Sigmoid colon (tissue), 7 donors: ENCODE measurements at regions of chr2 and their contacts with region 1.

Region 1: GRCh38 chr2:172102391-172103278 is at the start of gene DLX2:
- DNase-seq: peak; percentile 82
- H3K4me3 ChIP-seq: peak within 1 kb of the TSS; percentile 9 to 51 (median 41)
- H3K27ac ChIP-seq: no peak within 1 kb of the TSS
- H3K4me1 ChIP-seq: peaks cover 0 to 72% (median 65%) of the 10 kb centered on the region in 4 donors
- H3K27me3 ChIP-seq: peaks cover 83 to 100% (median 99%) of the 10 kb centered on the region in 3 donors
- CTCF ChIP-seq: no peak
- EP300 ChIP-seq: no peak
- POLR2A ChIP-seq: no peak
- total RNA-seq, gene DLX2: under 0.01 to 0.14 TPM in 2 of 4 donors, not detected in the others

Region 2: DNA sequence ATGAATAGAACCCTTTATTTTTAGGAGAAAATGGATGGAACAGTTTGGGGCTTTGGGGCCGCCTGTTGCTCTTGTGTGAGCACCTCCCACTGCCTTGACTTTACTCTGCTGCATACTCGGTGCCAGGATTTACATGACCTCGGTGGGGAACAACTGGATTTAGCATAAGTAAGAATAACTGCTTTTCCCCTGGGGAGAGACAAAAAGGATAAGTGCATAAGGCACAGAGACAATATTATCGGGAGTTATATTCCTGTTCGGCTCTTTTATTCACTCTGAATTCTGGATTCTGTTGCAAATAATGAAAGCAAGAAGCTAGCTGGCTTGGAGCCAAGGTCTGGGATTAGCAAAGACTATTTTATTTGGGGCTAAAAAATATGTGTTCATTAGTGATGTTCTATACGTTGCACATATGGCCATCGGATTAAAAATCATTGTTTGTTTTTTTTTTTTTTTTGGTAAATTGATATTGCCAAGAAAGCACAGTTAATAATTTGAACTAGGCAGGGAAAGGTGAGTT is 510.5 kb before region 1 on chr2:
- intact Hi-C with region 1: loop called (anchors 5 kb)
- DNase-seq: no peak
- H3K4me3 ChIP-seq: no peak overlapping the region
- H3K27ac ChIP-seq: no peak overlapping the region
- H3K4me1 ChIP-seq: no peaks in the 10 kb centered on the region
- H3K27me3 ChIP-seq: no peaks in the 10 kb centered on the region
- CTCF ChIP-seq: no peak
- EP300 ChIP-seq: no peak
- POLR2A ChIP-seq: no peak

Region 3: DNA sequence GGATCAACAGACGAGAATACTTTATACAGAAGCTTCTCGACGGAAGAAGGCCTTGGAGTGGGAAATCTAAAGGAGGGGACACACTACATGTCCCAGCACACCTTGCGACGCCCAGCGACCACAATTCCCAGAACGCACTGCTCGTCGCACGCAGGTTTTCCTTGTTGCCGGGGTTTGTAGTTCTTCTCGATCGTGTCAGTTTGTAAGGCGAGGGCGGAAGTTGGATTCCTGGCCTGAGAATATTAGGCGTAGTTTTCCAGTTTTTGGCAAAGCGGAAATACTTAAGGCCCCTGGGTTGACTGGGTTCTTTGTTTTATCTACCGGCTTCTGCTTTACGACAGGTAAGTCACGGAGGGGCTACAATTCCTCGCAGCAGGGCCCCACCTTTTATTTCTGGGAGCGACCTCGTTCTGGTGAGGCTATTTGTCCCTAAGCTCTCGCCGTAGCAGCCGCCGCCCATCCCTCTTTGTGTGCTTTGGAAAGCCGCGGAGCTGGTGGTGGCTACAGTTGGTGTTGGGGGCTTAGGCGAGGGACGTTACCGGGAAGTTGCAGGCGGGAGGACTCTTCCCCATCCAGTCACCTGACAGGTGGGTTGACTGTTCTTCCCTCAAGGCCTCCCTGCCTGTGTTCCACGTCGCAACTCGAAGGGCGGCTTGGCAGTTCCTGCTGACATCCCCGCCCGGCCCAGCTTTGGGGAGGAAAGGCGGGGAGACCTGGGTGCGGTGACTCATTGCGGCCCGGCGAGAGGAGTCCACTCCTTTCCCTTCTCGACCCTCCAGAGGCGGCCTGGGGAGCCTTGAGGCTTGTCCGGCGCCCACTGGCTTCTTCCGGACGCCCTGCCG is 415.1 kb before region 1 on chr2 and contains the start of gene DYNC1I2:
- intact Hi-C with region 1: loop called (anchors 5 kb)
- DNase-seq: peak; percentile 96
- H3K4me3 ChIP-seq: peak within 1 kb of the TSS; percentile 55 to 91 (median 75)
- H3K27ac ChIP-seq: peak within 1 kb of the TSS; percentile 81 to 88 (median 85)
- H3K4me1 ChIP-seq: peaks cover 0 to 19% (median 16%) of the 10 kb centered on the region in 4 donors
- H3K27me3 ChIP-seq: no peaks in the 10 kb centered on the region
- CTCF ChIP-seq: peak in 1 of 4 experiments; percentile 16
- EP300 ChIP-seq: no peak
- POLR2A ChIP-seq: peak in 1 of 2 donors; percentile 31
- total RNA-seq, gene DYNC1I2: 103 to 133 (median 127) TPM

Region 4: DNA sequence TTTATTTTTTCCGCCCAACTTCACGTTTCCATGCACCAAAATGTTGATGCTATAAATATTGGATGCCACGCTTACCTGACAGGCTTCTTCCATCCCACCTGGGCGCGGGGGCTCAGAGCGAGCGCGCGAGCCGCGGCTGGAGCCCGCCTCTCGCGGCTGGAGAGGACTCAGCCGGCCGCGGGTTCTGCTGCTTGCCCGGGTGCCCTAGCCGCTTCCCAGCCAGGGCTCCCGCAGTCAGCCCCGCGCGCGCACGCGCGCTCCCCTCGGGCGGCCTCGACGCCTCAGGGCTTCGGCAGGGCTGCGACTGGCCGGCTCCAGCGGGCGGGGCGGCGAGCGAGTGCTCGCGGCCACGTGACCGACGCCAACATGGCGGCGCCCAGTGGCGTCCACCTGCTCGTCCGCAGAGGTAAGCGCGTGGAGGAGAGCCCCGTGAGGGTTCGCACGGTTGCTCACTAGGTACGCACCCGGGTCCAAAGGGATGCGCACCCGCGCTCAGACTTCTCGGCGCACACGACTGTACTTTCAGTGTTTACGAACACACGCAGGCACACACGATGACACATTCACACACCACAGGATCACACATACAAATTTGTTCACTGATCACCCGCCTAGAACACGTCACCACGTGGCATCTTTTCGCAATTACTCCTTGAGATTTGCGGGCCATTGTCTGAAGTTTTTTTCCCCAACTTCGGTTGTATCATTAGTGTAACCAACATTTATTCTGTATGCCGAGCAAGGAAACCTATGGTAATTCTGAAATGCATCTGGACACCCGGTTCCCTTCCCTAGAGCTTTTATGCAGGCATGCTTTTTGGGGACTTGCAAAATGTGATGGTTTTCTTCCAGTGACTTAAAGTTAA is 102.8 kb before region 1 on chr2 and contains the start of gene METAP1D:
- intact Hi-C with region 1: loop called (anchors 5 kb)
- DNase-seq: peak; percentile 93
- H3K4me3 ChIP-seq: peak within 1 kb of the TSS; percentile 57 to 76 (median 62)
- H3K27ac ChIP-seq: peak within 1 kb of the TSS; percentile 47 to 65 (median 56)
- H3K4me1 ChIP-seq: peaks cover 0 to 13% (median 10%) of the 10 kb centered on the region in 4 donors
- H3K27me3 ChIP-seq: no peaks in the 10 kb centered on the region
- CTCF ChIP-seq: no peak
- EP300 ChIP-seq: no peak
- POLR2A ChIP-seq: no peak
- total RNA-seq, gene METAP1D: 7.8 to 14.4 (median 10.2) TPM

Region 5: GRCh38 chr2:172555522-172556283 is 453.1 kb after region 1 on chr2 and contains the start of gene PDK1:
- intact Hi-C with region 1: loop called (anchors 5 kb)
- DNase-seq: peak; percentile 94
- H3K4me3 ChIP-seq: peak within 1 kb of the TSS; percentile 48 to 98 (median 82)
- H3K27ac ChIP-seq: peak within 1 kb of the TSS; percentile 85 to 96 (median 91)
- H3K4me1 ChIP-seq: peaks cover 0 to 17% (median 10%) of the 10 kb centered on the region in 4 donors
- H3K27me3 ChIP-seq: no peaks in the 10 kb centered on the region
- CTCF ChIP-seq: no peak
- EP300 ChIP-seq: peak in 1 of 4 donors; percentile 4
- POLR2A ChIP-seq: peak in 1 of 2 donors; percentile 29
- total RNA-seq, gene PDK1: 6.4 to 15.0 (median 12.4) TPM